ENCODE measurements at regions of chr20 and their contacts with region 1.

Region 1: DNA sequence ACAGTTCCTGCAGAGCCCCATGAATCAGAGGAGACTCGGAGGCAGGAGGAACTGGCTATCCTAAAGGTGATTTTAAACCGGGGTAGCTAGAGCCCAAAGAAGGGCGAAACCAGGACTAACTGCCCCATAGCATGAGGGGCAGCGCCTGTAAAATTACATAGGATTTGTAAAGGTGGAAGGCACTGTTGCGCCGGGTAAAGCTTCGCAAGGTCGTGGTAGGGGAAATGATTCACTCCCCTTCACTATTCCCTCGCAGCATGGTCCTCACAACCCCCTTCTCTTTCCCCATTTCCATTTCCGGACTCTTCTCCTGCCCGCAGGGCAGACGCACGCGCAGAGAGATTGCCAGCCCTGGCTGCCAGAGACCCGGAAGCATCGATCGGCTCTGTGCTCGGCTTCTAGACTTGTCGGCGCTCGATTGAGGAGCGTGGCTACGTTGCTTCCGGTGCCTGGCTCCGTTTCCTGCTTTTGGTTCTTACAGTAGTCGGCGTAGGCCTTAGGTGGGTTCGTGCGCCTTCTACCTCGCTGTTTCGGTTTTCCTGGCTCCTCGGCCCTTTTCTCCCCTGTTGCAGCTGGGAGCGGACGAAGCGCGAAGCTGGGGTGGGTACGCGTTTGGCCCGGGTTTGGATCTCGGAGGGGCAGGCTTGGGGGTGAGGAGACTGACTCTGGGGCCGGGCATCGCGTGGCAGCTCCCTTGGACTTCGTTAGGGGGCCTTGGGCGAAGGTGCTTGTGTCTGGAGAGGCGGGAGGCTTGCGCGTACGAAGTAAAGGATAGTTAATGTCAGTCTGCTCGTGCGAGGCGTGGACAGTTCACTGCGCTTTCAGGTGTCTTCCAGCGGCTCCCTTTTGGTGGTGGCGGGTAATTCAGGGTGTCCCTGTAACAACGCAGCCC is at the start of gene SNRPB2:
- DNase-seq: peak; percentile 85 to 96 (median 88)
- ATAC-seq: peak; percentile 96
- H3K4me3 ChIP-seq: peak within 1 kb of the TSS; percentile 93
- H3K4me3 Mint-ChIP-seq: peak within 1 kb of the TSS; percentile 99
- H3K27ac ChIP-seq: peak within 1 kb of the TSS; percentile 81 to 92
- H3K27ac Mint-ChIP-seq: peak within 1 kb of the TSS; percentile 96
- H3K4me1 ChIP-seq: peaks cover 29% of the 10 kb centered on the region
- H3K4me1 Mint-ChIP-seq: peaks cover 57% of the 10 kb centered on the region
- H3K27me3 ChIP-seq: peaks cover 6 to 16% of the 10 kb centered on the region in 2 experiments
- H3K27me3 Mint-ChIP-seq: peaks cover 26% of the 10 kb centered on the region
- CTCF ChIP-seq: no peak
- total RNA-seq, gene SNRPB2: 49.6 to 50.4 TPM

Region 2: GRCh38 chr20:16573001-16573965 is 156.5 kb before region 1 on chr20 and contains the start of gene KIF16B:
- CTCF ChIA-PET with region 1: no interaction called
- POLR2A ChIA-PET with region 1: interaction called, 19 read pairs
- intact Hi-C with region 1: loop called (anchors 1 to 2 kb)
- DNase-seq: peak; percentile 58 to 89 (median 76)
- ATAC-seq: peak; percentile 81
- H3K4me3 ChIP-seq: peak within 1 kb of the TSS; percentile 78
- H3K4me3 Mint-ChIP-seq: peak within 1 kb of the TSS; percentile 92
- H3K27ac ChIP-seq: no peak within 1 kb of the TSS
- H3K27ac Mint-ChIP-seq: peak within 1 kb of the TSS; percentile 64
- H3K4me1 ChIP-seq: peaks cover 34% of the 10 kb centered on the region
- H3K4me1 Mint-ChIP-seq: peaks cover 49% of the 10 kb centered on the region
- H3K27me3 ChIP-seq: no peaks in the 10 kb centered on the region
- H3K27me3 Mint-ChIP-seq: no peaks in the 10 kb centered on the region
- CTCF ChIP-seq: no peak
- total RNA-seq, gene KIF16B: 10.2 to 11.5 TPM

Region 3: GRCh38 chr20:16709017-16709416 is 20.8 kb before region 1 on chr20:
- CTCF ChIA-PET with region 1: no interaction called
- POLR2A ChIA-PET with region 1: interaction called, 20 read pairs
- intact Hi-C with region 1: loop called in 1 of 2 experiments (anchors 1 kb)
- DNase-seq: peak in 4 of 14 experiments; percentile 7 to 75 (median 44)
- ATAC-seq: peak; percentile 78
- H3K4me3 ChIP-seq: no peak overlapping the region
- H3K4me3 Mint-ChIP-seq: peak overlapping the region; percentile 60
- H3K27ac ChIP-seq: no peak overlapping the region
- H3K27ac Mint-ChIP-seq: peak overlapping the region; percentile 31
- H3K4me1 ChIP-seq: peaks cover 20% of the 10 kb centered on the region
- H3K4me1 Mint-ChIP-seq: peaks cover 47% of the 10 kb centered on the region
- H3K27me3 ChIP-seq: no peaks in the 10 kb centered on the region
- H3K27me3 Mint-ChIP-seq: no peaks in the 10 kb centered on the region
- CTCF ChIP-seq: no peak

Region 4: GRCh38 chr20:16975682-16976081 is 245.9 kb after region 1 on chr20:
- CTCF ChIA-PET with region 1: no interaction called
- POLR2A ChIA-PET with region 1: no interaction called
- intact Hi-C with region 1: no loop called
- DNase-seq: no peak
- ATAC-seq: no peak
- H3K4me3 ChIP-seq: no peak overlapping the region
- H3K4me3 Mint-ChIP-seq: no peak overlapping the region
- H3K27ac ChIP-seq: no peak overlapping the region
- H3K27ac Mint-ChIP-seq: no peak overlapping the region
- H3K4me1 ChIP-seq: no peaks in the 10 kb centered on the region
- H3K4me1 Mint-ChIP-seq: no peaks in the 10 kb centered on the region
- H3K27me3 ChIP-seq: no peaks in the 10 kb centered on the region
- H3K27me3 Mint-ChIP-seq: no peaks in the 10 kb centered on the region
- CTCF ChIP-seq: no peak

Region 5: DNA sequence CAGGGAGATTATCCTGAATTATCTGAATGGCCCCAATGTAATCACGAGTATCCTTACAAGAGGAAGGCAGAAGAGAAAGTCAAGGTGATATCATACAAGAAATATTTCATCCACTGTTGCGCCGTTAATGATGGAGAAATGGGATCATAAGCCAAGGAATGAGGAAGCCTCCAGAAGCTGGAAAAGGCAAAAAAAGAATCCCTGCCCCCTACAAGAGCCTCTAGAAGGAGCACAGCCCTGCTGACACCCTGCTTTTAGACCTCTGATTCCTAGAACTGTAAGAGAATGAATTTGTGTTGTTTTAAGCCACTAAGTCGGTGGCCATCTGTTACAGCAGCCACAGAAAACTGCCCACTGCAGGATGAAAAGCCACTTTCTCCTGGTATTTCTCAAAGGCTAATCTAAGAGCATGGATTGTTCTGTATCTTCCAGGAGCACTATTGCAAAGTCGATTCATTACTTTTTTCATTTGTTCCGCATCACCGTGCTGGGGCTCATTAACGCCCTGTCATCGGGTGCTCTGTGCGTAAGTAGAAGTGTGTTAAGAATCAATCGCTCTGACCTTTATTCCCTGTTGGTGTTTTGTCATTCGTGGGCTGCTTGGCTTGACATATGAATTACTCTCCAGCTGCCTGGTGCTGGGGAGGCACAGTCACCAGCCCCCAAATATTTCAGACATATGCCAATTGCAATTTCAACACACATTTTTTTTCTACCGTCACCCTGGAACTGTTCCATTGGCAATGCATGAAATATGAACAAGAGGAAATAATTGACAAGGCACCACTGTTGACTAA is 614.0 kb after region 1 on chr20:
- CTCF ChIA-PET with region 1: no interaction called
- POLR2A ChIA-PET with region 1: no interaction called
- intact Hi-C with region 1: no loop called
- DNase-seq: no peak
- ATAC-seq: no peak
- H3K4me3 ChIP-seq: no peak overlapping the region
- H3K4me3 Mint-ChIP-seq: no peak overlapping the region
- H3K27ac ChIP-seq: no peak overlapping the region
- H3K27ac Mint-ChIP-seq: no peak overlapping the region
- H3K4me1 ChIP-seq: no peaks in the 10 kb centered on the region
- H3K4me1 Mint-ChIP-seq: no peaks in the 10 kb centered on the region
- H3K27me3 ChIP-seq: peaks cover 0 to 3% of the 10 kb centered on the region in 2 experiments
- H3K27me3 Mint-ChIP-seq: peaks cover 24% of the 10 kb centered on the region
- CTCF ChIP-seq: no peak

Region 6: DNA sequence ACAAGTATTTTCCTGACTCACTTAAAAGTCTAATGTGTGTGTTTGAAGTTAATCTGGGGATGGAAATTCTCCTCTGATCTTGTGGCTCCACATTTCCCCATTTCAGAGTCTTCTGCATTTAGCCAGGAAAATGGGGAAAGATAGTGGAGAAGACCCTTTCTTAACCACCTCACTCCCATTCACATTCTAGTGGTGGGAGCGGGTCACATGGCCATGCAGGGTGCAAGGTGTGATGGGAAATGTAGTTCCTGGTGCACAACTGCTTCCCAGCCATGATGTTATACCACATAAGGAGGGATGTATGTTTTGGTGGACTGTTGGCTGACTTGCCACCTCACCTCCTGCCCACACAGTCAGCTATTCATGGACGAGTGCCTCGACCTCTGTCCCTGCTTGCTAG is 1031.8 kb after region 1 on chr20:
- CTCF ChIA-PET with region 1: no interaction called
- POLR2A ChIA-PET with region 1: no interaction called
- intact Hi-C with region 1: no loop called
- DNase-seq: no peak
- ATAC-seq: no peak
- H3K4me3 ChIP-seq: no peak overlapping the region
- H3K4me3 Mint-ChIP-seq: no peak overlapping the region
- H3K27ac ChIP-seq: no peak overlapping the region
- H3K27ac Mint-ChIP-seq: no peak overlapping the region
- H3K4me1 ChIP-seq: no peaks in the 10 kb centered on the region
- H3K4me1 Mint-ChIP-seq: no peaks in the 10 kb centered on the region
- H3K27me3 ChIP-seq: peaks cover 0 to 4% of the 10 kb centered on the region in 2 experiments
- H3K27me3 Mint-ChIP-seq: peaks cover 8% of the 10 kb centered on the region
- CTCF ChIP-seq: no peak